ENCODE measurements at regions of chr3 and their contacts with region 1.

Region 1: GRCh38 chr3:49454458-49454857 is 15.6 kb upstream of the DAG1 start:
- DNase-seq: peak in 4 of 5 donors; percentile 18 to 55 (median 42)
- ATAC-seq: peak; percentile 53 to 81 (median 68)
- H3K4me3 ChIP-seq: no peak overlapping the region
- H3K27ac ChIP-seq: peak overlapping the region in 7 of 12 donors; percentile 6 to 74 (median 59)
- H3K4me1 ChIP-seq: peaks cover 0 to 28% (median 14%) of the 10 kb centered on the region in 12 donors
- H3K27me3 ChIP-seq: no peaks in the 10 kb centered on the region
- CTCF ChIP-seq: peak in 11 of 12 donors; percentile 8 to 54 (median 36)
- POLR2A ChIP-seq: no peak

Region 2: DNA sequence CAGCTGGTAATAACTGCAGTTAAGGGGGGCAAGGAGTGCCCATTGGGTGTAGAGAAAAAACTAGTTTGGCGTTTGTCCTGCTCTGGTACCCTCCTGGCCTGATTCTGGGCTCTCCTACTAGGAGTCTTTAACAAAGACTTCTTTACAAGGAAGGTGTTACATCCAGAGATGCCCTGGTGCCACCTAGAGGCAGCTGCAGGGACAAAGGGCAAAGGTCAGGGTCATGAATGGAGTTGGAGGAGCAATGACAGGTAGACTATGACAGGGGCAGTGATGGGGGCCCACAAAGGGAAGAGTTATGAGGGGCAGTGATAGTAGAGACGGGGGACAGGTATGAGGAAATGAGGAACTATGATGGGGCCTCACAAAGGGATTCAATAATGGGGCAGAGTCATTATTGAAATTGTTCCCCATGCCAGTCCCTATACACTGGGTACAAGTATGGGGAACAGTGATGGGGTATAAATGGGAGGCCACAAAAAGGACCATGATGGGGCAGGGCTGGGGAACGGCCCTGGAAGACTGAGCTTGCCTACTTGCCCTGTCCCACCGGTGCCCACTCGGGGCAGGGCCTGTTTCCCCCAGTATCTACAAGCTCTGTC is 296.2 kb before region 1 on chr3:
- intact Hi-C with region 1: loop called in 2 of 10 experiments (anchors 10 kb)
- DNase-seq: no peak
- ATAC-seq: peak in 3 of 4 donors; percentile 38 to 49 (median 40)
- H3K4me3 ChIP-seq: no peak overlapping the region
- H3K27ac ChIP-seq: no peak overlapping the region
- H3K4me1 ChIP-seq: no peaks in the 10 kb centered on the region
- H3K27me3 ChIP-seq: no peaks in the 10 kb centered on the region
- CTCF ChIP-seq: peak in 9 of 12 donors; percentile 19 to 49 (median 27)
- POLR2A ChIP-seq: no peak

Region 3: GRCh38 chr3:49283997-49284396 is 170.5 kb before region 1 on chr3:
- intact Hi-C with region 1: no loop called
- DNase-seq: no peak
- ATAC-seq: no peak
- H3K4me3 ChIP-seq: no peak overlapping the region
- H3K27ac ChIP-seq: no peak overlapping the region
- H3K4me1 ChIP-seq: peaks cover 0 to 10% (median 7%) of the 10 kb centered on the region in 12 donors
- H3K27me3 ChIP-seq: no peaks in the 10 kb centered on the region
- CTCF ChIP-seq: no peak
- POLR2A ChIP-seq: no peak

Region 4: DNA sequence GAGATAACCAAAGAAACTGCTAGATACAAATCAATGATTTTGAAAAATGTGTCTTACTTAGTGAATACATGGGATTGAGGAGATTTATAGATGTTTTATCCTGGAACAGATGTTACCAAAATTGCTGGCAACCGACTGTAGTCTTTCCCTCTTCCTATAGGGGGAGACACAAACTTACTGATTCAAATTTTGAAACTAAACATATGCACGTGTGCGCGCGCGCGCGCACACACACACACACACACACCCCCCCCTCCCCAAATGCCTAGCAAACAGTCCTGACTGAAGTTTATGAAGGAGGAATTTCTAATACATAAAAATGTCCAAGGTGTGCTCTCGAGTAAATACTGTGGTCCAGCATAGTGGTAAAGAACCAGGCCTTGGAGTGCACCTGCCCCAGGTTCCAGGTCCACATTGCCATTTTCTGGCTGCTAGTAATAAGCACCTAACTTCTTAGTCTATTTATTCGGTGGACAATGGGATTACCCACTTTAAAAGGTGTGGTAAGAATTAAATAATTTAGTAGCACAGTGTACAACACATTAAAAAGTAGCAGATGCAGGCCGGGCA is 158.9 kb before region 1 on chr3:
- intact Hi-C with region 1: loop called in 7 of 10 experiments (anchors 1 to 5 kb)
- DNase-seq: no peak
- ATAC-seq: peak in 1 of 4 donors; percentile 12
- H3K4me3 ChIP-seq: no peak overlapping the region
- H3K27ac ChIP-seq: peak overlapping the region in 7 of 12 donors; percentile 75 to 85 (median 84)
- H3K4me1 ChIP-seq: peaks cover 7 to 24% (median 19%) of the 10 kb centered on the region in 12 donors
- H3K27me3 ChIP-seq: no peaks in the 10 kb centered on the region
- CTCF ChIP-seq: peak; percentile 35 to 63 (median 51)
- POLR2A ChIP-seq: no peak